ENCODE measurements at regions of chrX and their contacts with region 1.

Region 1: DNA sequence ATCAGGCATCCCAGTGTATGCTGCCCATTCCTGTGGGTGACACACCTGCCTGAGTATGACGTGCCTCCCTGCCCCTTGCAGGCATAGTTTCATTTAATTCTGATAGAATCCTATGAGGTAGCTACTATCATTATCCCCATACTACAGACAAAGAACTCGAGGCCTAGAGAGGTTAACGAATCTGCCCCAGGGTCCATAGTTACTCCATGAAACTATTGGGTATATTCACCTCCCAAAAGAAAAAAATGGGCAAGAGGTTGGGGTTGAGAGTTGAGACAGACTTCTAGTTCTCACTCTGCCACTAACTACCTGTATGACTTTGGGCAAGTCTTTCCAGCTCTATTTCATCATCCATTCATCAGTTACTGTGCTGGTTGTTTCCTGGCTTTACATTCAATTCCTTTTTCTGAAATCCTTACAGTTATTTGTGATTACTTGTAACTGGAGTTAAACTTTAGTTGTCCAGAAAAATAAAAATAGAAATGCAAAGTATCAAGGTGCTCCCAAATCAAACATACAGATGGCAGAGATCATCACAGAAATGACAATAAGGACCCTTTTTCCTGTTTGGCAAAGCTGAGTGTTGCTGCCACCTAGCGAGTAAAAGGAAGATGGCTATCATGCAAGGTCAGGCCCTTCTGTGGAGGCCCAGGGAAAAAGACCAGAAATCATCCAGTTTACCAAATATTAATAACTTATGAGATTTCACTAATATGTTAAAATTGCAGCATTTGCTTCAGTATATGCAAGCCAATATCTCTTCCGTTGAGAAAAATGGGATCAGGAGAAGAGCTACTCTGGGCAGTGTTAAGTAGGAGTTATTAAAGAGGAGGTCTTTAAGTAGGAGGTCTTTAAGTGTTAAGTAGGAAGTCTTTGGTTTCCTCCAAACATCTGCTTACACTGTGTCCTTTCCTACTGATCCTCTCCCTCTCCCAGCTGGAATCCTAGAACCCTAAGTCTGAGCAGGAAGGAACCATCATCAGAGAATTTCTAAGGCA is 17.1 kb upstream of the MAP7D3 start:
- DNase-seq: peak; percentile 50
- ATAC-seq: peak; percentile 76
- H3K4me3 ChIP-seq: no peak overlapping the region
- H3K27ac ChIP-seq: no peak overlapping the region
- H3K4me1 ChIP-seq: 0 out of 2 replicates have a peak, but pooled peaks cover 3% of the 10 kb centered on the region
- H3K27me3 ChIP-seq: no peaks in the 10 kb centered on the region
- CTCF ChIP-seq: peak; percentile 76
- POLR2A ChIP-seq: no peak
- RAD21 ChIP-seq: peak; percentile 84

Region 2: DNA sequence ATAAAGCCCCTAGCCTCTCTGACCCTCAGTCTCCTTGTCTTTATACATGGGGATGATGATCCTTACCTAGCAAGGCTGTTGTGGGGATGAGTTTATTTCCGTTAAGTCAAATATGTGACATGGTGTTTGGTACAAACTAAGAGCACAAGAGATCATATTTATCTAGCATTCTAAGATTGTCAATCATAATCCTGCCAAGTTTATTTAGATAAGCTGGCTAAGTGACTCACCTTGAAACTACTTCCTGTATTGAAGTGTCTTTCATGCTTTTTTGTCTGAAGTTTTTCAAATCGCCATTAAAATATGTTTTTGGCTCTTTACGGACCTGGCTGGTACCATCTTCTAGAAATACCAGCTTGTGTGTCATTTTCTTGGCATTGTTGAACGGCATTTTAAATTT is 47.8 kb before region 1 on chrX:
- CTCF ChIA-PET with region 1: no interaction called
- POLR2A ChIA-PET with region 1: no interaction called
- dilution Hi-C with region 1: no loop called
- in situ Hi-C with region 1: no loop called
- intact Hi-C with region 1: no loop called
- DNase-seq: no peak
- ATAC-seq: no peak
- H3K4me3 ChIP-seq: no peak overlapping the region
- H3K27ac ChIP-seq: no peak overlapping the region
- H3K4me1 ChIP-seq: peaks cover 3% of the 10 kb centered on the region; the same call in 1 of the 2 replicates
- H3K27me3 ChIP-seq: no peaks in the 10 kb centered on the region
- CTCF ChIP-seq: no peak
- POLR2A ChIP-seq: no peak
- RAD21 ChIP-seq: no peak

Region 3: DNA sequence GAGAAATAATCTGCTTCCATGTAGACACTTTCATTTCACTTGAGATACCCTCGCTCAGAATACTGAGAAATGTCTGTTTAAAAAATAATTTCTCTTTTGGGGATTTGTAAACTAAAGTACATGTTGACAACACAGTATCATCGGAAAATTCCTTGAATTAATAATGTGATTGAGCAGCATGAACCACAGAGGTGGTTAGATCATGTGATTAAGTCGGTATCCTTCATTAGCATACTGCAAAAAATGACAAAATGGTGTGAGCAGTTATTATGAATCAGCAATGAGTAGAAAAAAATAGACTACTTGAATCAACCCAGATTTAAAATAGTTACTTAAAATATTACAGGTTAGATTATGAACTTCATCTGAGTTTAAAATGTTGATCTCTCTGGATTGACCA is 31.3 kb before region 1 on chrX:
- CTCF ChIA-PET with region 1: no interaction called
- POLR2A ChIA-PET with region 1: no interaction called
- dilution Hi-C with region 1: no loop called
- in situ Hi-C with region 1: no loop called
- intact Hi-C with region 1: no loop called
- DNase-seq: no peak
- ATAC-seq: no peak
- H3K4me3 ChIP-seq: no peak overlapping the region
- H3K27ac ChIP-seq: no peak overlapping the region
- H3K4me1 ChIP-seq: no peaks in the 10 kb centered on the region
- H3K27me3 ChIP-seq: no peaks in the 10 kb centered on the region
- CTCF ChIP-seq: no peak
- POLR2A ChIP-seq: no peak
- RAD21 ChIP-seq: no peak

Region 4: GRCh38 chrX:136353519-136354095 is 85.3 kb after region 1 on chrX:
- CTCF ChIA-PET with region 1: no interaction called
- POLR2A ChIA-PET with region 1: interaction called, 28 read pairs
- dilution Hi-C with region 1: no loop called
- in situ Hi-C with region 1: no loop called
- intact Hi-C with region 1: no loop called
- DNase-seq: no peak
- ATAC-seq: no peak
- H3K4me3 ChIP-seq: no peak overlapping the region
- H3K27ac ChIP-seq: no peak overlapping the region
- H3K4me1 ChIP-seq: no peaks in the 10 kb centered on the region
- H3K27me3 ChIP-seq: no peaks in the 10 kb centered on the region; the same call in none of the 2 replicates
- CTCF ChIP-seq: no peak
- POLR2A ChIP-seq: no peak
- RAD21 ChIP-seq: no peak

Region 5: DNA sequence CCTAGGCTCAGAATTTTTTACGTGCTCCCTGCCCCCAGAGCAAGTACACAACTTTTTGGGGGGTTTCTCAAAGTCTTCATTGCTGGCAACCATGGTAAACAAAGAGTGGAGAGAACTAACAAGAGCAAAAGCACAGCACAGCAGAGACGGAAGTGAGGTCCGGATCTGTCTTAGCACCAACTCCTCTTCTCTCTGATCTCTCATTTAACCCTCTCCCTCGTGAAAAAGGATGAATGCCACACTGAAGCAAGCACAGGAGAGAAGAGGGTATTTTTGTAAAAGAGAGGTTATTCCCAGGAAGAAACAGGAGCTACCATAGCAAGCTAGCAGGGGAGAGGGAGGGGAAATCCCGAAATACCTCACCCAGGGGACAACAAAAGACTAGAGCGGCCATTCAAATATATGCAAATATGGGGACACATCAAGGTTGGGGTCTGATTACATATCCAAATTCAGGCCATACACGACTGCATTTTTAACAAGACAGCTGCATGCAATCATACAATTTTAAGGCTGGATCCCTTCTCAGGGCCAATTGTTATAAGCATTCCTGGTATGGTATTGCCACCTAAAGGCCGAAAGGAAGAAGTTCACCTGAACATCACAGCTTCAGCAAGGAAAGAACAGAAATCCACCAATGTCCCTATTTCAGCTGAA is 426.2 kb after region 1 on chrX:
- CTCF ChIA-PET with region 1: no interaction called
- POLR2A ChIA-PET with region 1: no interaction called
- dilution Hi-C with region 1: no loop called
- in situ Hi-C with region 1: no loop called
- intact Hi-C with region 1: loop called (anchors 10 kb)
- DNase-seq: peak; percentile 58
- ATAC-seq: peak; percentile 82
- H3K4me3 ChIP-seq: no peak overlapping the region
- H3K27ac ChIP-seq: no peak overlapping the region
- H3K4me1 ChIP-seq: no peaks in the 10 kb centered on the region
- H3K27me3 ChIP-seq: no peaks in the 10 kb centered on the region; the same call in 1 of the 2 replicates
- CTCF ChIP-seq: peak; percentile 67
- POLR2A ChIP-seq: no peak
- RAD21 ChIP-seq: peak; percentile 80